GM23248 (cell line): ENCODE measurements at regions of chr12 and their contacts with region 1.

Region 1: GRCh38 chr12:40921563-40922163 is 229.4 kb downstream of the CNTN1 start:
- DNase-seq: peak; percentile 51
- H3K4me3 ChIP-seq: no peak overlapping the region
- H3K27ac ChIP-seq: no peak overlapping the region
- H3K4me1 ChIP-seq: no peaks in the 10 kb centered on the region
- H3K27me3 ChIP-seq: 0 out of 2 replicates have a peak, but pooled peaks cover 3% of the 10 kb centered on the region

Region 2: GRCh38 chr12:40622246-40622838 is 299.3 kb before region 1 on chr12:
- in situ Hi-C with region 1: loop called (anchors 10 kb)
- DNase-seq: peak; percentile 64
- H3K4me3 ChIP-seq: no peak overlapping the region
- H3K27ac ChIP-seq: no peak overlapping the region
- H3K4me1 ChIP-seq: no peaks in the 10 kb centered on the region
- H3K27me3 ChIP-seq: no peaks in the 10 kb centered on the region